Activated CD4-positive, alpha-beta memory T cell treated with anti-CD3 and anti-CD28 coated beads for 36 hours (primary cell): ENCODE measurements at regions of chr4 and their contacts with region 1.

Region 1: GRCh38 chr4:82373816-82374625 is at the start of gene HNRNPD:
- DNase-seq: peak; percentile 96
- H3K4me3 Mint-ChIP-seq: peak within 1 kb of the TSS; percentile 97
- H3K27ac Mint-ChIP-seq: peak within 1 kb of the TSS; percentile 97
- H3K4me1 Mint-ChIP-seq: peaks cover 35% of the 10 kb centered on the region
- H3K27me3 Mint-ChIP-seq: no peaks in the 10 kb centered on the region
- total RNA-seq, gene HNRNPD: 398 to 400 TPM

Region 2: GRCh38 chr4:82293304-82293703 is 80.7 kb before region 1 on chr4:
- CTCF ChIA-PET with region 1: no interaction called
- POLR2A ChIA-PET with region 1: no interaction called
- intact Hi-C with region 1: no loop called
- DNase-seq: no peak
- H3K4me3 Mint-ChIP-seq: peak overlapping the region; percentile 32
- H3K27ac Mint-ChIP-seq: peak overlapping the region; percentile 45
- H3K4me1 Mint-ChIP-seq: peaks cover 6% of the 10 kb centered on the region
- H3K27me3 Mint-ChIP-seq: no peaks in the 10 kb centered on the region

Region 3: GRCh38 chr4:82352913-82353366 is 21.1 kb before region 1 on chr4:
- CTCF ChIA-PET with region 1: interaction called, 7 read pairs
- POLR2A ChIA-PET with region 1: interaction called, 6 read pairs
- intact Hi-C with region 1: loop called (anchors 1 kb)
- DNase-seq: no peak
- H3K4me3 Mint-ChIP-seq: peak overlapping the region; percentile 29
- H3K27ac Mint-ChIP-seq: peak overlapping the region; percentile 88
- H3K4me1 Mint-ChIP-seq: peaks cover 50% of the 10 kb centered on the region
- H3K27me3 Mint-ChIP-seq: no peaks in the 10 kb centered on the region

Region 4: DNA sequence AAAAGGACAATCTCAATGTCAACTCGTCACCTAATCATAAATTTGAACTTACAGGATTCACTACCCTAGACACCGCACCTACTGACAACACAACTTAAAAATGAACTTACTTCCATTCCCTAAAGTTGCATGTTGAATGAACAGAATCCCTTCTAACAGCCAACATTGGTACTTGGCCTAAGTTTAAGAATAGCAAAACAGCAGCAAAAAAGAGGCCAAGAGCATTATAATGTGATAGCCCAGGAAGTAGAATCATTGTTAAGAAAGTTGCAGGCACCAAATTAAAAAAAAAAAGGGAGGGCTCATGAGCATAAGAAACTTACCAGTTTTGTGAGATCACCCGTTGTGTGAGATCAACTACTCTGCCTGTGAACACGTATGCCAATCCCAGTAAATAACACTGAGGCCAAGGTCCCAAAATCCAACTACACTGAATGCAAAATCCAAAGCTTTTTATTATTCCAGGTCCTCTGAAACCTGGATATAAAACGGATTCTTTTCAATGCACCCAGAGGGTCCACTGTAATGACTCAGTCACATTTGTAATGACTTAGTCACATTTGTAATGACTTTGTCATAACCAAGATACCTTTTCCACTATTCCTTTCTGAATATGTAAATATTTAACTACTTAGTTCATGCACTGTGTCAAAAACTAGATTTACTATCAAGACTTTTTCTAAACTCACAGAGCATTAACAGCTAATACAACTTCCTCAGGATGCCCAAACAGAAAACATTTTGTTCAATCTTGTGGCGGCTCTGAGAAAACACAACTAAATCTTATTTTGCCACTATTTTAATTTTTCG is 49.4 kb after region 1 on chr4:
- CTCF ChIA-PET with region 1: interaction called, 16 read pairs
- POLR2A ChIA-PET with region 1: interaction called, 57 read pairs
- intact Hi-C with region 1: no loop called
- DNase-seq: no peak
- H3K4me3 Mint-ChIP-seq: no peak overlapping the region
- H3K27ac Mint-ChIP-seq: peak overlapping the region; percentile 68
- H3K4me1 Mint-ChIP-seq: peaks cover 48% of the 10 kb centered on the region
- H3K27me3 Mint-ChIP-seq: no peaks in the 10 kb centered on the region

Region 5: GRCh38 chr4:82865592-82865991 is 491.6 kb after region 1 on chr4:
- CTCF ChIA-PET with region 1: no interaction called
- POLR2A ChIA-PET with region 1: no interaction called
- intact Hi-C with region 1: loop called (anchors 10 kb)
- DNase-seq: peak; percentile 20
- H3K4me3 Mint-ChIP-seq: no peak overlapping the region
- H3K27ac Mint-ChIP-seq: peak overlapping the region; percentile 69
- H3K4me1 Mint-ChIP-seq: peaks cover 25% of the 10 kb centered on the region
- H3K27me3 Mint-ChIP-seq: no peaks in the 10 kb centered on the region

Region 6: DNA sequence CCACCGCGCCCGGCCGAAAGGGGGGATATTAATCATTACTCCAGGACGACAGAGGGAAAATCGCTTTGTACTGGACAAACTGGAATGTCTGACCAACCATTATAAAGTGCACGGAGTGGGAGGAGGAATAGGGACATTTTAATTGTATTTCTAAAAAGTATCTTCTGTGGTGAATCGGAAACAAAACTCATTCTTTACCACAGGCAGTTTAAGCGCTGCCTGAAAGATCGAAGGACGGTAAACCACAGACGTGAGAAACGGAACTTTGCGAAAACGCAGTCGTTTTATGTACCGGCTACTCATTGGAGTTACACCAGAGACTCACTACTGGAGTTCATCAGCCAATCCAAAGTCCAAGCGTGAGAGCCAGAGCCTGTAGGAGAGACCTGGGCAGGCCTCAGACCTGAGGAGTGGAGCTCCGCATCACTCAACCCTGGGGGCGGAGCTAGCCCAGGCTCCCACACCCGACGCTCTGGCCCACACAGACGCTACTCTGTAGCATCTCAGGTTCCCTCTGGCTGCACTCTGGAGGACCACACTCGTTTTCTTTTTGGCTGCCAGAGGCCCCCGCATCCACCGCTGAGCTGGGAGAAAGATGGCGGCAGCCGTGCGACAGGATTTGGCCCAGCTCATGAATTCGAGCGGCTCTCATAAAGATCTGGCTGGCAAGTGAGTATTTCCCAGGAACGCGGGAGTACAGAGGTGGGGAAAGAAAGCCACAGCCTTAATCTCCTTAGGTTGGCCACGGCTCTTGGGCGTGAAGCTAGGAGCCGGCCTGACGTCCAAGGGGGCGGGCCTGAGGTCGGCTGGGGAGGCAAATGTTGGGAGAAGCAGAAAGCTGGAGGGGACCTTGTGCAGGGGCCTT is 660.8 kb after region 1 on chr4 and contains the start of gene COPS4:
- CTCF ChIA-PET with region 1: no interaction called
- POLR2A ChIA-PET with region 1: interaction called, 5 read pairs
- intact Hi-C with region 1: loop called (anchors 1 kb)
- DNase-seq: peak; percentile 97
- H3K4me3 Mint-ChIP-seq: peak within 1 kb of the TSS; percentile 85
- H3K27ac Mint-ChIP-seq: peak within 1 kb of the TSS; percentile 98
- H3K4me1 Mint-ChIP-seq: peaks cover 28% of the 10 kb centered on the region
- H3K27me3 Mint-ChIP-seq: no peaks in the 10 kb centered on the region
- total RNA-seq, gene COPS4: 38.5 to 40.6 TPM